Right ventricle myocardium superior (tissue), 1 donor: ENCODE measurements at regions of chr2 and their contacts with region 1.

Region 1: DNA sequence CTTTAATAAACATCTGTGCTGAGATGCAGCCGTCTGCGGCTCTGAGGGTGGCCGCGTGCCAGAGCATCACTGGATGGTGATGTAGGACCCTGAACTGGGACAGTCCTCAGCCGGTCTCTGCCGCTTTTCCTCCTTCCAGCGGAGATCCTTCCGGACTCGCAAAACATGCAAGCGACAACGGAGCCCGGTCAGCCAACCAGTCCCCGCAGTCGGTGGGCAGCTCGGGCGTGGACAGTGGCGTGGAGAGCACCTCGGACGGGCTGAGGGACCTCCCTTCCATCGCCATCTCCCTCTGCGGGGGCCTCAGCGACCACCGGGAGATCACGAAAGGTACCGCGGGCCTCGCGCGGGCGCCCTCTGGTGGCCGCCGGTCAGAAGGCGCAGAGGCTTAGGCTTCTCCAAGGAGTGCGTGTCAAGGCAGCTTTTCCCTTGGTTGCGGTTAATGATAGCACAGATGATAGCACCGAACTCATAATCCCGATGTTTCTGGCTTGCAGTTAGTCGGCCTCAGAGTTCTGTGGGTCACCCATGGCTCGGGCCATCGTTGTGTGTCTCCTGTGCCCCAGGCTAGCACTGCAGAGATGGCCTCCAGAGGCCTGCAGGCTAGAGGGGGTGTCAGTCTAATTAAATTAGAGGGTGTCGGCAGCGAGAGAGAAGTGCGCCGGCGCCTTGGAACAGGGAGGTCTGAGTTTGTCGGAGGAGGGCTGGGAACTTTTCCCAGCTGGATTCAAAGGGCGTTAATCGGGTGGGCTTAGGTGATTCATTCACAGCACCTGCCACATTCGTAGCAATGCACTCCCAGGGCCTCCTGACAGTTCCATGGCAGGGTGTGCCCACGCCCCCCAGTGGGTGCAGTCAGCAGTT is 38.5 kb downstream of the LPIN1 start:
- DNase-seq: no peak
- ATAC-seq: peak; percentile 83

Region 2: DNA sequence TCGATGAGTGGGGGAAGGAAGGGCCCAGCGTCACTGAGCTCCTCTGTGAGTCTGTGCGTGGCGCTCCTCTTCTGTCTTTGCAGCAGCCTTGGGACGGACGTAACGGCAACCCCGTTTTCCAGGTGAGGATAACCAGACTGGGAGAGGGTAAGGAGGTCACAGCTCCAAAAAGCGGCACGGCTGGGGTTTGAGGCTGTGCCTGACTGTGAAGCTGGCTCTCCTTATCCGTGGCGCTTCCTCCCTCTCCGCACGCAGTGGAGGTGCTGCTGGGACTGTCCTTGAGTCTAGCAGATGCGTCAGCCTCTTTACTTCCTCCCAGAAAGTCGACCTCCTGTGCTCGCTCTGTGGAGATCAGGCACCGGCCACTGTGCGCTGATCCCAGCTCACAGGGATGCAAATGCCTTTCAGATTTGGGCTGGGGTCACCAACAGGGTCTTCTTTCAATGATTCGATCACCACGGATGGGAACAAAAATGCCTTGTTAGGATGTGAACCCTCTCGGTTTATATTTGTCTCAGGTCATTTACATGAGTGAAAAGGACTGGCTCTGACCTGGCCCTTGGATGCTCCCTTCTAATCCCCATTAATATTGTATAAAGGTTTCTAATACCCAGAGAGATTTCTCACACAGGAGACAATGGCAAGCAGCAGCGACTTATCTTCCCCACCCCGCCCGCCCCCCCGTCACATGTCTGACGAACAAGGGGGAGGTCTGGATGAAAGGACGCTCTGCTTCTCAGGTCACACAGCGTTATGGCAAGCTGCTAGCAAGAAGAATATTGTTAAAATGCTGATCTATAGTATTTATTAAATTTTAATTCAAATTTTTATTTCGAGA is 288.9 kb before region 1 on chr2:
- intact Hi-C with region 1: no loop called
- DNase-seq: peak; percentile 50
- ATAC-seq: peak; percentile 44

Region 3: GRCh38 chr2:11692966-11693521 is 91.9 kb before region 1 on chr2:
- intact Hi-C with region 1: loop called (anchors 5 kb)
- DNase-seq: peak; percentile 44
- ATAC-seq: peak; percentile 66